SK-N-SH (cell line): ENCODE measurements at regions of chr3 and their contacts with region 1.

Region 1: GRCh38 chr3:114827495-114827894 is 319.6 kb downstream of the ZBTB20 start:
- DNase-seq: peak; percentile 38
- H3K4me3 ChIP-seq: no peak overlapping the region; a peak in 1 of 4 replicates
- H3K27ac ChIP-seq: no peak overlapping the region
- H3K4me1 ChIP-seq: no peaks in the 10 kb centered on the region
- H3K27me3 ChIP-seq: no peaks in the 10 kb centered on the region
- CTCF ChIP-seq: peak; percentile 78
- EP300 ChIP-seq: no peak
- RAD21 ChIP-seq: peak; percentile 88

Region 2: GRCh38 chr3:114803042-114803695 is 24.3 kb before region 1 on chr3:
- CTCF ChIA-PET with region 1: no interaction called
- POLR2A ChIA-PET with region 1: no interaction called
- DNase-seq: no peak
- H3K4me3 ChIP-seq: no peak overlapping the region
- H3K27ac ChIP-seq: no peak overlapping the region
- H3K4me1 ChIP-seq: no peaks in the 10 kb centered on the region
- H3K27me3 ChIP-seq: no peaks in the 10 kb centered on the region
- CTCF ChIP-seq: no peak
- EP300 ChIP-seq: no peak
- RAD21 ChIP-seq: no peak

Region 3: DNA sequence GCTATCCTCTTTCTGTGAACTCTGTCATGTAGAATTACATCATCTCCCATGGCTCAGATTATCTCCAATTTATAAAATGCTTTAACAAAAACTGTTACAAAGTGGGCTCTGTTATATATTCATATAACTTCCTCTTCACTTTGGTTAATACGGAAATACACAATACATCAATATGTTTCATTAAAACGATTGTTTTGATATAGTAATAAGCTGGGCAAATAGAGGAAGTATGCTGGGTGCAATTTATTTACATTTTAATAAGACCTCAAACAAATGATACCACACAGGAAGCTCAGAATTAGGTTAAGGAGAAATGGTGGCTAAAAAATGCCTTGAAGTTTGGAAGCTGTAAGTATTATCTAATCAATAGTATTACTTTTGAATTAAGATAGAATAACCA is 11.4 kb before region 1 on chr3:
- CTCF ChIA-PET with region 1: interaction called, 12 read pairs
- POLR2A ChIA-PET with region 1: no interaction called
- DNase-seq: no peak
- H3K4me3 ChIP-seq: no peak overlapping the region
- H3K27ac ChIP-seq: no peak overlapping the region
- H3K4me1 ChIP-seq: no peaks in the 10 kb centered on the region
- H3K27me3 ChIP-seq: no peaks in the 10 kb centered on the region
- CTCF ChIP-seq: no peak
- EP300 ChIP-seq: no peak
- RAD21 ChIP-seq: no peak